H1 (cell line): ENCODE measurements at regions of chr11 and their contacts with region 1.

Region 1: DNA sequence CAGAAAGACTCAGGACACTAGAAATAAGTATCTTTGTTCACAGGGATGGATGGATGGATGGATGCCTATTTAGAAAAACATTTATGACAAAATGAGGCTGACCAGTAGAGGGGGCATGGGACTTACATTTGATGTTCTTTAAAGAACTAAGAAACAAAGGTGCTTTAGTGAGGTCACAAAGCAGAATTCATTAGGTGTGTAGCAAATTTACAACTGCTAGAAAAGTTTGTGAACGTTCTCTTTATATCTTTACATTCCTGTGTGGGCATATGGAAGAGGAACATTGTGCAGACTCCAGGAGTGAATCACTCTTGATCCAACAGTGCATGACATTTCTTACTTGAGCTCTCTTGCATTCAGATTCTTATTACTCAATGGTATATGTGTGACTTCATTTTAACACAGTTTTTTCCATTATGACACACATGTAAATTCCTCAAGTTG is 15.8 kb upstream of the SIK2 start:
- DNase-seq: no peak
- H3K4me3 ChIP-seq: no peak overlapping the region
- H3K27ac ChIP-seq: no peak overlapping the region
- H3K4me1 ChIP-seq: peaks cover 0 to 5% (median 0%) of the 10 kb centered on the region in 4 experiments; a peak in 1 of 7 replicates
- H3K27me3 ChIP-seq: no peaks in the 10 kb centered on the region
- CTCF ChIP-seq: peak in 2 of 3 experiments; percentile 37 to 70; a peak in 2 of 4 replicates
- EP300 ChIP-seq: no peak
- POLR2A ChIP-seq: no peak
- RAD21 ChIP-seq: peak; percentile 76 to 78

Region 2: DNA sequence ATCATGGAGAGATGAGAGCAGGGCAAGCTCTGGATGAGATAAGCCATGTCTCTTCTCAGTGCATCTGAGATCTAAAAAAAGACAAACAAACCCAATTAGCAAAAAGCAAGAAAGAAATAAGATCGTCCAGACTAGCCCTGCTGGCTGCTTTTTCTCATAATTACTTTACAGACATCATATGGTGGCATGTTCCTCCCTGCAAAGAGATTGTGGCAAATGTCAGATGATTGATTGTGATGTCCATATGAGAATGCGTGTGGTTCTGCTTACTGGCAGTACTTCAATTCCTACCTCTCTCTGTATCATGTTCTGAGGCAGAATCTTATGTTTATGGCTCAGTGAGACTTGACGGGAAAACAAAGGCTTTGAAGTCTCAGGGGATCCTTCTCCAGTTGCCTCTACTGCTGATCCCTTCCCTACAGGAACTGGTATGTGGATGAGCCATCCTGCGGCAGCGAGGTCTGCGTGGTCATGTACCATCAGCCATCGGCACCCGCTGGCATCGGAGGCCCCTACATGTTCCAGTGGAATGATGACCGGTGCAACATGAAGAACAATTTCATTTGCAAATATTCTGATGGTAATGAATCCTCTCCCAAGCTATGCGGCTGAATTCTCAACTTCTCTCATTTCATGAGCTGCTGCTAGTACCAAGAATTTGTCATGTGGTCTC is 37.1 kb before region 1 on chr11:
- CTCF ChIA-PET with region 1: no interaction called
- POLR2A ChIA-PET with region 1: no interaction called
- DNase-seq: no peak
- H3K4me3 ChIP-seq: no peak overlapping the region
- H3K27ac ChIP-seq: no peak overlapping the region
- H3K4me1 ChIP-seq: peaks cover 0 to 17% (median 3%) of the 10 kb centered on the region in 4 experiments; a peak in 4 of 7 replicates
- H3K27me3 ChIP-seq: 0 out of 7 replicates have a peak, but pooled peaks cover 0 to 1% (median 0%) of the 10 kb centered on the region in 4 experiments
- CTCF ChIP-seq: no peak
- EP300 ChIP-seq: no peak
- POLR2A ChIP-seq: no peak
- RAD21 ChIP-seq: no peak

Region 3: DNA sequence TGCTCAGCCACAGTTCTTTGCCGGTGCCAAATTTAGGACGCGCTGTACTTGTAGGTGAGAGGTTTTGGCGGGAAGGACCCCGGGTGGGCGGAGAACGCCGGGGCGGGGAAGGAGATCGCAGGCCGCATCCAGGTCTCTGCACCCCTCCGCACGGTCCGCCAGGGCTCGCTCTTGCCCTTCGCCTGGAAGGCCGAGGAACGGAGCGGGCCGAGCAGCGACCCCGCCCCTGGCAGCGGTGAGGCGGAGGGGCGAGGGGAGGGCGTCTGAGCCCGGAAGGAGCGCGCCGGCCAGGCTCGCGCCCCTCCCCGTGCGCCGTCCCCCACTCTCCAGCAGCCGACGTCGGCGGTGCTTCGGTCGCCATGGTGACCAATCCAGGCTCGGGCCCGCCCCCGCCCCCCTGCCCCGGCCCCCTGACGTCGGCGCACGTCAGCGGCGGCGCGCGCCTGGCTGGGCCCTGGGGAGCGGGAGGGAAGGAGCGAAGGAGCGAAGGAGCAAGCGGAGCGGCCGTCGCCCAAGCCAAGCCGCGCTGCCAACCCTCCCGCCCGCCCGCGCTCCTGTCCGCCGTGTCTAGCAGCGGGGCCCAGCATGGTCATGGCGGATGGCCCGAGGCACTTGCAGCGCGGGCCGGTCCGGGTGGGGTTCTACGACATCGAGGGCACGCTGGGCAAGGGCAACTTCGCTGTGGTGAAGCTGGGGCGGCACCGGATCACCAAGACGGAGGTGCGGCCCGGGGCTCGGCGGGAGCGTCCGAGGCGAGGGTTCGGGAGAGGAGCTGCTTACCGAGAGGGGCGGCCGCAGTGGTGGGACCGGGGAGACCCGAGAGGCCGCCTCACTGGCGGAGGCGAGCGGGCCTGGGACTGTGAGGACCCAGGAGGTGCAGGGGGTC is 15.8 kb after region 1 on chr11 and contains the start of gene SIK2:
- CTCF ChIA-PET with region 1: interaction called, 12 read pairs
- POLR2A ChIA-PET with region 1: no interaction called
- DNase-seq: peak; percentile 92
- H3K4me3 ChIP-seq: peak within 1 kb of the TSS; percentile 62 to 96 (median 77)
- H3K27ac ChIP-seq: peak within 1 kb of the TSS; percentile 45; the same call in 1 of the 2 replicates
- H3K4me1 ChIP-seq: peaks cover 0 to 10% (median 3%) of the 10 kb centered on the region in 4 experiments; a peak in 2 of 7 replicates
- H3K27me3 ChIP-seq: peaks cover 0 to 18% (median 12%) of the 10 kb centered on the region in 4 experiments; a peak in 5 of 7 replicates
- CTCF ChIP-seq: peak; percentile 93 to 97 (median 96)
- EP300 ChIP-seq: peak in 1 of 2 experiments; percentile 39; a peak in 1 of 3 replicates
- POLR2A ChIP-seq: 0 out of 3 replicates have a peak, but pooled peaks of 1 of the 2 experiments have one; percentile 53
- RAD21 ChIP-seq: peak; percentile 99
- total RNA-seq, gene SIK2: 8.8 and 12.7 TPM in 2 replicates

Region 4: GRCh38 chr11:111693224-111693937 is 107.0 kb after region 1 on chr11:
- CTCF ChIA-PET with region 1: no interaction called
- POLR2A ChIA-PET with region 1: no interaction called
- DNase-seq: no peak
- H3K4me3 ChIP-seq: no peak overlapping the region
- H3K27ac ChIP-seq: no peak overlapping the region
- H3K4me1 ChIP-seq: peaks cover 0 to 5% (median under 1%) of the 10 kb centered on the region in 4 experiments; a peak in 2 of 7 replicates
- H3K27me3 ChIP-seq: no peaks in the 10 kb centered on the region
- CTCF ChIP-seq: no peak
- EP300 ChIP-seq: no peak
- POLR2A ChIP-seq: no peak
- RAD21 ChIP-seq: no peak

Region 5: GRCh38 chr11:111833524-111833923 is 247.1 kb after region 1 on chr11:
- CTCF ChIA-PET with region 1: interaction called, 24 read pairs
- POLR2A ChIA-PET with region 1: no interaction called
- DNase-seq: no peak
- H3K4me3 ChIP-seq: no peak overlapping the region
- H3K27ac ChIP-seq: no peak overlapping the region
- H3K4me1 ChIP-seq: no peaks in the 10 kb centered on the region
- H3K27me3 ChIP-seq: no peaks in the 10 kb centered on the region
- CTCF ChIP-seq: peak in 2 of 3 experiments; percentile 14 to 40; a peak in 2 of 4 replicates
- EP300 ChIP-seq: no peak
- POLR2A ChIP-seq: no peak
- RAD21 ChIP-seq: peak; percentile 61 to 64